ENCODE measurements at regions of chr2 and their contacts with region 1.

Region 1: DNA sequence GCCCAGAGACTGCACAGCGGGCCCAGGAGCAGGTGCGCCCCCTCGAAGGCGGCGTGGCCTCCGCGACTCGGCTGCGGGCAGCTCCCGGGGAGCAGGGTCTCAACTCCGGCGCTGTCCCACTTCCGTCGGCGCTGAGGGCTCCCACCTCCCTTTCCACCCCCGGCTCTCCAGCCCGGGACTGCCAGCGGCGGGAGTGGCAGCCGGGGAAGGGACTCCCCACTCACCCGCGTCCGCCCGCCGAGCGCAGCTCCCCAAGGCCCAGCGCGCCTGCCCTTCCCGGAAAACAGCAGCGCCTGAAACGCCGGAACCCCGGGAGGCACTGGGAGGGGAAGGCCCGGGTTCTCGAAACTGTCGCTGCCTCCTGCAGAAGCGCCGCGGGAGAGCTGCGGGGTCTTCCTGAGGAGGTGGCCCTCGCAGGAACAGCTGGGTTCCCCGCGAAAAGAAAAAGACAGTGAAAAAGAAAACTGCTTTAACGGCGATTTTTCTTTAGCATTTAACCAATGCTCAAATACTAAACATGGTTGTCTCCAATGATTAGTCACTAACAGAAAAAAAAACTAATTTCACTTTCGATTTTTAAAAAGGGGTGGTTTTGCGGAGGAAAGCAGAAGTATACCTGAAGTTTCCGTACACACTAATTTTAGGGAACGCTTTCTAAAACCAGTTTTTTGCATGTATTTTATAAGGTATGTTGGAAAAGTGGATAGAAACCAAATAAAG is at the start of gene NMI:
- DNase-seq: peak; percentile 47 to 84 (median 80)
- ATAC-seq: peak; percentile 79
- H3K4me3 ChIP-seq: peak within 1 kb of the TSS; percentile 76
- H3K4me3 Mint-ChIP-seq: peak within 1 kb of the TSS; percentile 85 to 99 (median 95)
- H3K27ac ChIP-seq: peak within 1 kb of the TSS; percentile 92
- H3K27ac Mint-ChIP-seq: peak within 1 kb of the TSS; percentile 94 to 100 (median 97)
- H3K4me1 ChIP-seq: peaks cover 18 to 22% of the 10 kb centered on the region in 2 donors
- H3K4me1 Mint-ChIP-seq: peaks cover 33 to 66% (median 48%) of the 10 kb centered on the region in 7 donors
- H3K27me3 ChIP-seq: no peaks in the 10 kb centered on the region
- H3K27me3 Mint-ChIP-seq: no peaks in the 10 kb centered on the region
- total RNA-seq, gene NMI: 14.9 to 69.9 (median 29.3) TPM

Region 2: GRCh38 chr2:149587220-149587949 is 1702.1 kb before region 1 on chr2 and contains the start of gene MMADHC:
- CTCF ChIA-PET with region 1: no interaction called
- POLR2A ChIA-PET with region 1: interaction called, 9 read pairs
- intact Hi-C with region 1: loop called (anchors 2 kb)
- DNase-seq: peak; percentile 83 to 93 (median 91)
- ATAC-seq: peak; percentile 98
- H3K4me3 ChIP-seq: peak within 1 kb of the TSS; percentile 97
- H3K4me3 Mint-ChIP-seq: peak within 1 kb of the TSS; percentile 95 to 99 (median 97)
- H3K27ac ChIP-seq: peak within 1 kb of the TSS; percentile 93
- H3K27ac Mint-ChIP-seq: peak within 1 kb of the TSS; percentile 95 to 100 (median 99)
- H3K4me1 ChIP-seq: peaks cover 23 to 39% of the 10 kb centered on the region in 2 donors
- H3K4me1 Mint-ChIP-seq: peaks cover 27 to 58% (median 50%) of the 10 kb centered on the region in 7 donors
- H3K27me3 ChIP-seq: no peaks in the 10 kb centered on the region
- H3K27me3 Mint-ChIP-seq: peaks cover 22 to 30% (median 30%) of the 10 kb centered on the region in 5 donors
- total RNA-seq, gene MMADHC: 53.3 to 93.4 (median 66.6) TPM

Region 3: GRCh38 chr2:151176661-151177060 is 112.9 kb before region 1 on chr2:
- CTCF ChIA-PET with region 1: no interaction called
- POLR2A ChIA-PET with region 1: no interaction called
- intact Hi-C with region 1: no loop called
- DNase-seq: no peak
- ATAC-seq: no peak
- H3K4me3 ChIP-seq: no peak overlapping the region
- H3K4me3 Mint-ChIP-seq: no peak overlapping the region
- H3K27ac ChIP-seq: no peak overlapping the region
- H3K27ac Mint-ChIP-seq: no peak overlapping the region
- H3K4me1 ChIP-seq: no peaks in the 10 kb centered on the region
- H3K4me1 Mint-ChIP-seq: no peaks in the 10 kb centered on the region
- H3K27me3 ChIP-seq: no peaks in the 10 kb centered on the region
- H3K27me3 Mint-ChIP-seq: peaks cover 11 to 24% (median 15%) of the 10 kb centered on the region in 5 donors

Region 4: DNA sequence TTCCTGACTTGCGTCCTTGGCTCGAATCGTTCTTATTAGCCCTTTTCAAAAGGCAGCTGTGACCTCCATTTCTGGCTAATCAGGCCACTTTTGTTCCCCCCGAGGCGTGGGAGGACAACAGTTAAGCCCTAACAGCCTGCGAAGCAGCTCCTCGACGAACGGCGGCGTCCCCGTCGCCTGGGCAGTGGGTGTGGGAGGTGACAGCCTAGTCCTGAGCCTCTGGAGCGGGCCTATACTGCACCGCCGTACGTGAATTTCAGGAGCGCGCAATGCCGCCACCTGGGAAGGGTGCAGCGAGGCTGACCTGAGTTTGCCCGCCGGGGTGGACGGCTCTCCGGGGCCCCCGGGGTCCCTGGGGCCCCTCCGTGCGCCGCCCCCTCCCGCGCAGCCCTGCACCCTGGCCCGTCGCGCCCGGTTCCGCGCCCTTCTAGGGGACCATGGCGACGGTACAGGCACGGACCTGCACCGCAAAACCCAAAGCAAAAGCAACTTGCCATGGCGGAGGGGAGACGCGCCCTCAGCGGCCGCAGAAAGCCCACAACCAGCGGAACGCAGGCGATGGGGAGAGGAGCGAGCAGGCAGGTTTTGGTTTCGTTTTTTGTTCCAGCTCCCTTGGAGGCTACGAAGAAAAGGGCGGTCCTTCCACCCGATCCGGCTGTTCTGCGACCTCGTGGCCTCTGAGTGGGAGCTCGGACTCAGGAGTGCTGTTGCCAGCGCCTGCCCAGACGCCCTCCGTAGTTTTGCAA is 28.1 kb before region 1 on chr2 and contains the start of gene RBM43:
- CTCF ChIA-PET with region 1: no interaction called
- POLR2A ChIA-PET with region 1: interaction called, 92 read pairs
- intact Hi-C with region 1: loop called (anchors 1 kb)
- DNase-seq: peak; percentile 56 to 86 (median 80)
- ATAC-seq: peak; percentile 91
- H3K4me3 ChIP-seq: peak within 1 kb of the TSS; percentile 87
- H3K4me3 Mint-ChIP-seq: peak within 1 kb of the TSS; percentile 85 to 98 (median 96)
- H3K27ac ChIP-seq: peak within 1 kb of the TSS; percentile 96
- H3K27ac Mint-ChIP-seq: peak within 1 kb of the TSS; percentile 90 to 99 (median 99)
- H3K4me1 ChIP-seq: no peaks in the 10 kb centered on the region
- H3K4me1 Mint-ChIP-seq: peaks cover 11 to 47% (median 31%) of the 10 kb centered on the region in 7 donors
- H3K27me3 ChIP-seq: no peaks in the 10 kb centered on the region
- H3K27me3 Mint-ChIP-seq: no peaks in the 10 kb centered on the region
- total RNA-seq, gene RBM43: 6.4 to 19.2 (median 15.7) TPM

Region 5: GRCh38 chr2:151315381-151315903 is 25.9 kb after region 1 on chr2:
- CTCF ChIA-PET with region 1: no interaction called
- POLR2A ChIA-PET with region 1: no interaction called
- intact Hi-C with region 1: loop called in 1 of 2 experiments (anchors 1 kb)
- DNase-seq: no peak
- ATAC-seq: no peak
- H3K4me3 ChIP-seq: no peak overlapping the region
- H3K4me3 Mint-ChIP-seq: no peak overlapping the region
- H3K27ac ChIP-seq: no peak overlapping the region
- H3K27ac Mint-ChIP-seq: no peak overlapping the region
- H3K4me1 ChIP-seq: no peaks in the 10 kb centered on the region
- H3K4me1 Mint-ChIP-seq: peaks cover 5 to 27% (median 12%) of the 10 kb centered on the region in 7 donors
- H3K27me3 ChIP-seq: no peaks in the 10 kb centered on the region
- H3K27me3 Mint-ChIP-seq: peaks cover 0 to 8% (median 2%) of the 10 kb centered on the region in 5 donors

Region 6: GRCh38 chr2:151409601-151410484 is 120.3 kb after region 1 on chr2 and contains the start of gene RIF1:
- CTCF ChIA-PET with region 1: no interaction called
- POLR2A ChIA-PET with region 1: interaction called, 9 read pairs
- intact Hi-C with region 1: loop called (anchors 1 kb)
- DNase-seq: peak; percentile 65 to 78 (median 69)
- ATAC-seq: peak; percentile 95
- H3K4me3 ChIP-seq: peak within 1 kb of the TSS; percentile 73
- H3K4me3 Mint-ChIP-seq: peak within 1 kb of the TSS; percentile 91 to 99 (median 96)
- H3K27ac ChIP-seq: peak within 1 kb of the TSS; percentile 89
- H3K27ac Mint-ChIP-seq: peak within 1 kb of the TSS; percentile 88 to 98 (median 95)
- H3K4me1 ChIP-seq: peaks cover 6 to 14% of the 10 kb centered on the region in 2 donors
- H3K4me1 Mint-ChIP-seq: peaks cover 12 to 43% (median 35%) of the 10 kb centered on the region in 7 donors
- H3K27me3 ChIP-seq: no peaks in the 10 kb centered on the region
- H3K27me3 Mint-ChIP-seq: peaks cover 0 to 3% (median 0%) of the 10 kb centered on the region in 5 donors
- total RNA-seq, gene RIF1: 39.8 to 74.0 (median 66.7) TPM

Region 7: DNA sequence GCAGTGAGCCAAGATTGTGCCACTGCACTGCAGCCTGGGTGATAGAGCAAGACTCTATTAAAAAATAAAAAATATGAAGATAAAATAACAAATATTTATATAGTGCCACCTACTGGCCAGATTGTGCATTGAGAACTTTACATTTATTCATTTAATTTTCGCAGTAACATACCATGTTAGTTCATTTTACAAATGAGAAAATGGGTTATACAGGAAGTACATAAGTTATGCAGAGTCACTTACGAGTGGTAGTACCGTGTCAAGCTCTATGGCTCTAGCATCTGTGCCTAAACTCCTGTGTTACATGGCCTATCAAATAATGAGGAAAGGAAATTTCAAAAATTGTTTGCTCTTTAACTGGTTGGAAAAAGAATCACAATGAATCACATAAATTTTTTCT is 148.1 kb after region 1 on chr2:
- CTCF ChIA-PET with region 1: interaction called, 4 read pairs
- POLR2A ChIA-PET with region 1: no interaction called
- intact Hi-C with region 1: loop called (anchors 1 to 2 kb)
- DNase-seq: peak in 5 of 9 donors; percentile 24 to 40 (median 32)
- ATAC-seq: peak; percentile 74
- H3K4me3 ChIP-seq: no peak overlapping the region
- H3K4me3 Mint-ChIP-seq: no peak overlapping the region
- H3K27ac ChIP-seq: no peak overlapping the region
- H3K27ac Mint-ChIP-seq: peak overlapping the region in 8 of 9 donors; percentile 30 to 81 (median 60)
- H3K4me1 ChIP-seq: no peaks in the 10 kb centered on the region
- H3K4me1 Mint-ChIP-seq: peaks cover 6 to 14% (median 12%) of the 10 kb centered on the region in 7 donors
- H3K27me3 ChIP-seq: no peaks in the 10 kb centered on the region
- H3K27me3 Mint-ChIP-seq: no peaks in the 10 kb centered on the region

Region 8: DNA sequence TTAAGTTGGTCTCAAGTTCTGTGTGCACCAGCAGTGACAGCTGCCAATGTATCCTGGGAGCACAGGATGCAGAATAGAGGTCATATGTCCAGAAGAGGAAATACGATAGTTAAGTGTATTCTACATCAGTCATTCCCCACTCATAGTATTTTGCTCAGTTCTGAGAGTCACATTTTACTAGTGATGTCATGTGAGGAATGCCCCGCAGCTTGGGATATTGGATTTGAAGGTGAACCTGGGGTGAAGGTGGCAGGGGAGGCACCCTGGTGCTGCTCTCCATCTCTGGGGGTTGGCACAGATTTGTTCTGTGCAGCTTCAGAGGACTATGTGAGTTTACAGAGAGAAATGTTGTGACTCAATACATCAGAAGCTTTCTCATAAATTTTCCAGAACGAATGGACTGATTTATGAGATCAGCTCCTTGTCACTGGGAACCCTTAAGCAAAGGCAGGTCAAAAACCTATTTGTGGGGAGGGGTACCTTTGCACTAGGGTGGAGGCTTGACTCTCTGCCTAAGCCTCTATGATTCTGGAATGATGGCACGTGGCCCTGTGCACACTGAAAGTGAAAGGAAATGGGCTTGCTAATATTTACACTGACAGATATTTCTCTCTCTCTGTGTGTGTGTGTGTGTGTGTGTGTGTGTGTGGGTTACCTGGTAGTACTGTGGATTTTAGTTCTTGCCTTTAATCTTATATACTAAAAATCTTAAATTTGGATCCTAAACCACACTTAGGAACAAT is 348.8 kb after region 1 on chr2:
- CTCF ChIA-PET with region 1: no interaction called
- POLR2A ChIA-PET with region 1: no interaction called
- intact Hi-C with region 1: loop called in 1 of 2 experiments (anchors 10 kb)
- DNase-seq: peak in 8 of 9 donors; percentile 23 to 66 (median 52)
- ATAC-seq: peak; percentile 59
- H3K4me3 ChIP-seq: peak overlapping the region; percentile 42
- H3K4me3 Mint-ChIP-seq: peak overlapping the region; percentile 18 to 89 (median 84)
- H3K27ac ChIP-seq: peak overlapping the region; percentile 69
- H3K27ac Mint-ChIP-seq: peak overlapping the region; percentile 90 to 97 (median 94)
- H3K4me1 ChIP-seq: peaks cover 33 to 40% of the 10 kb centered on the region in 2 donors
- H3K4me1 Mint-ChIP-seq: peaks cover 32 to 57% (median 38%) of the 10 kb centered on the region in 7 donors
- H3K27me3 ChIP-seq: no peaks in the 10 kb centered on the region
- H3K27me3 Mint-ChIP-seq: no peaks in the 10 kb centered on the region